Caco-2 (cell line): ENCODE measurements at regions of chr12 and their contacts with region 1.

Region 1: GRCh38 chr12:119902084-119902509 is 25.0 kb upstream of the CIT start:
- DNase-seq: peak; percentile 73 to 74
- H3K4me3 ChIP-seq: no peak overlapping the region
- H3K4me3 Mint-ChIP-seq: no peak overlapping the region
- H3K27ac Mint-ChIP-seq: no peak overlapping the region
- H3K4me1 ChIP-seq: no peaks in the 10 kb centered on the region
- H3K4me1 Mint-ChIP-seq: no peaks in the 10 kb centered on the region
- H3K27me3 ChIP-seq: no peaks in the 10 kb centered on the region
- H3K27me3 Mint-ChIP-seq: no peaks in the 10 kb centered on the region
- CTCF ChIP-seq: peak; percentile 83 to 90

Region 2: GRCh38 chr12:119659289-119659897 is 242.7 kb before region 1 on chr12:
- CTCF ChIA-PET with region 1: no interaction called
- POLR2A ChIA-PET with region 1: no interaction called
- intact Hi-C with region 1: loop called (anchors 5 kb)
- DNase-seq: peak in 1 of 2 experiments; percentile 56
- H3K4me3 ChIP-seq: no peak overlapping the region
- H3K4me3 Mint-ChIP-seq: no peak overlapping the region
- H3K27ac Mint-ChIP-seq: no peak overlapping the region
- H3K4me1 ChIP-seq: no peaks in the 10 kb centered on the region
- H3K4me1 Mint-ChIP-seq: no peaks in the 10 kb centered on the region
- H3K27me3 ChIP-seq: no peaks in the 10 kb centered on the region
- H3K27me3 Mint-ChIP-seq: no peaks in the 10 kb centered on the region
- CTCF ChIP-seq: peak; percentile 57 to 88

Region 3: DNA sequence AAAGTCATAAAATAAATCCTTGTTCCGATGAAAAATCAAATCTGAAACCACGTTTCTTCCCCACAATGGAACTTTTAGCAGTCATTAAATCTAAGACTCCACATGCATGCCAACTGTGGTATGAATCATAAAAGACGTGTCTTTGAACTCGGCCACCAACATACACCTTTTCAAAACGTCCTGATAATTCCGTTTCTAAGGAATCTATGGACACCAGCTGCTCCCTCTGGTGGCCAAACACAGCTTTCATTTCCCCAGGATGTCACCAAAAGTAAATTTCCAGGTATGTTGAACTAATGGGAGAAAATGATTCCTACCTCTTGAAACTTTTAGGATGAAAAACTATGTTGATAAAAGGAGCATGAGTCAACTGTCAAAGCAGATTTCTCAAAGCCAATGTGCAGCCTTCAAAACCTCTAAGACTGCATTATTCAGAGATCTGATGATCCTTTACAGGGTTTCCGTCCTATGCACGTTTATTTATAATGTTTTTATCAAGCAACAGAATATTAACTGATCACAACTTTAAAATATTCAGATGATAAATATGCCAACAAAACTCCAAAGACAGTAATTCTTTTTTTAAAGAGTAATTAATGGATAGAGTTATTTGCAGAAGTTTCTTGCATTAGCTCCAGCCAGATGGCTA is 121.2 kb before region 1 on chr12:
- CTCF ChIA-PET with region 1: no interaction called
- POLR2A ChIA-PET with region 1: no interaction called
- intact Hi-C with region 1: loop called (anchors 2 kb)
- DNase-seq: peak; percentile 47 to 51
- H3K4me3 ChIP-seq: no peak overlapping the region
- H3K4me3 Mint-ChIP-seq: no peak overlapping the region
- H3K27ac Mint-ChIP-seq: no peak overlapping the region
- H3K4me1 ChIP-seq: no peaks in the 10 kb centered on the region
- H3K4me1 Mint-ChIP-seq: peaks cover 6% of the 10 kb centered on the region
- H3K27me3 ChIP-seq: no peaks in the 10 kb centered on the region
- H3K27me3 Mint-ChIP-seq: no peaks in the 10 kb centered on the region
- CTCF ChIP-seq: peak; percentile 67 to 83

Region 4: GRCh38 chr12:119804011-119804641 is 98.0 kb before region 1 on chr12:
- CTCF ChIA-PET with region 1: no interaction called
- POLR2A ChIA-PET with region 1: interaction called, 4 read pairs
- intact Hi-C with region 1: loop called (anchors 1 kb)
- DNase-seq: peak; percentile 65
- H3K4me3 ChIP-seq: no peak overlapping the region
- H3K4me3 Mint-ChIP-seq: no peak overlapping the region
- H3K27ac Mint-ChIP-seq: no peak overlapping the region
- H3K4me1 ChIP-seq: no peaks in the 10 kb centered on the region
- H3K4me1 Mint-ChIP-seq: peaks cover 6% of the 10 kb centered on the region
- H3K27me3 ChIP-seq: no peaks in the 10 kb centered on the region
- H3K27me3 Mint-ChIP-seq: no peaks in the 10 kb centered on the region
- CTCF ChIP-seq: peak; percentile 48 to 79

Region 5: DNA sequence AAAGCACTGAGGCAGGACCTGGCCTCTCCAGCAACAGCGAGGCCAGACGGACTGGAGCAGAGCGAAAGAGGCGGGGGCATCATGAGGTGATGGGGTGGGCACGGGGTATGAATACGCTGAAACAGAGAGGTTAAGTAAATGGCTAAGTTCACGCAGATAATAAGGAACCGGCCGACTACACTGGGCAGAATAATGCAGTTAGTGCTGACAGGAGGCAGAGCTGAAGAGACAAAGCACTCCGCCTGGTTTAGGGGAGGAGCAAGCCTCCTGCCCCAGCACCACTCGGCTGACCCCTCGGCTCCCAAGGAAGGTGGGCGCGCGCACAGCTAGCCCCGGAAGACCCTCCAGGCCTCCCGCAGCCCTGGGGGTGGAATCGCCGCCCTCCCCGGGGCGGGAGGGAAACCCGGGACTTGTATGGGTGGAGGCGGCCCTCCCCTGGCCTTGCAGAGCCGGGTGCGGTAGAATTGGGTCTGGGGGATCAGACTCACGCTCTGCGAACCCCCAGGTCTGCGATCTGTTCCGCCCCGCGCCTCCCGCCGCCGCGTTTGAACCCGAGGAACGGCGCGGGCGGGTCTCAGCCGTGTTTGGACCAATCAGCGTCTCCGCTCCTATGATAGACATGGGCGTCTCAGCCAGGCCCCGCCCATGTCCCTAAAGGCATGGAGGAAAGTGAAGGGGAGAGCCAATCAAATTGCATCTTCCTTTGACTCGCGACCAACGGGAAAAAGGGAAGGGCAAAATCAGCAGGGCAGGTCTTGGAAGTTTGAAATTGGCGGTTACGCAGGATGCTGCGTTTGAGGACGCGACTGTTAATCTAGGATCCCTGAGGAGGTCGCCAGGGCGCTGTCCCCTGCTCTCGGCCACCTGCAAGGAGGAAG is 25.1 kb before region 1 on chr12 and contains the start of gene CIT:
- CTCF ChIA-PET with region 1: interaction called, 3 read pairs
- POLR2A ChIA-PET with region 1: no interaction called
- intact Hi-C with region 1: loop called (anchors 1 kb)
- DNase-seq: peak; percentile 92 to 94
- H3K4me3 ChIP-seq: peak within 1 kb of the TSS; percentile 98
- H3K4me3 Mint-ChIP-seq: peak within 1 kb of the TSS; percentile 91
- H3K27ac Mint-ChIP-seq: peak within 1 kb of the TSS; percentile 82
- H3K4me1 ChIP-seq: no peaks in the 10 kb centered on the region
- H3K4me1 Mint-ChIP-seq: peaks cover 13% of the 10 kb centered on the region
- H3K27me3 ChIP-seq: no peaks in the 10 kb centered on the region
- H3K27me3 Mint-ChIP-seq: peaks cover 3% of the 10 kb centered on the region
- CTCF ChIP-seq: peak in 1 of 2 experiments; percentile 0
- total RNA-seq, gene CIT: 55.9 and 62.3 TPM in 2 replicates

Region 6: GRCh38 chr12:119938049-119938667 is 36.1 kb after region 1 on chr12:
- CTCF ChIA-PET with region 1: no interaction called
- POLR2A ChIA-PET with region 1: no interaction called
- intact Hi-C with region 1: no loop called
- DNase-seq: peak; percentile 53 to 66
- H3K4me3 ChIP-seq: no peak overlapping the region
- H3K4me3 Mint-ChIP-seq: no peak overlapping the region
- H3K27ac Mint-ChIP-seq: no peak overlapping the region
- H3K4me1 ChIP-seq: no peaks in the 10 kb centered on the region
- H3K4me1 Mint-ChIP-seq: no peaks in the 10 kb centered on the region
- H3K27me3 ChIP-seq: no peaks in the 10 kb centered on the region
- H3K27me3 Mint-ChIP-seq: peaks cover 4% of the 10 kb centered on the region
- CTCF ChIP-seq: peak; percentile 79 to 83

Region 7: DNA sequence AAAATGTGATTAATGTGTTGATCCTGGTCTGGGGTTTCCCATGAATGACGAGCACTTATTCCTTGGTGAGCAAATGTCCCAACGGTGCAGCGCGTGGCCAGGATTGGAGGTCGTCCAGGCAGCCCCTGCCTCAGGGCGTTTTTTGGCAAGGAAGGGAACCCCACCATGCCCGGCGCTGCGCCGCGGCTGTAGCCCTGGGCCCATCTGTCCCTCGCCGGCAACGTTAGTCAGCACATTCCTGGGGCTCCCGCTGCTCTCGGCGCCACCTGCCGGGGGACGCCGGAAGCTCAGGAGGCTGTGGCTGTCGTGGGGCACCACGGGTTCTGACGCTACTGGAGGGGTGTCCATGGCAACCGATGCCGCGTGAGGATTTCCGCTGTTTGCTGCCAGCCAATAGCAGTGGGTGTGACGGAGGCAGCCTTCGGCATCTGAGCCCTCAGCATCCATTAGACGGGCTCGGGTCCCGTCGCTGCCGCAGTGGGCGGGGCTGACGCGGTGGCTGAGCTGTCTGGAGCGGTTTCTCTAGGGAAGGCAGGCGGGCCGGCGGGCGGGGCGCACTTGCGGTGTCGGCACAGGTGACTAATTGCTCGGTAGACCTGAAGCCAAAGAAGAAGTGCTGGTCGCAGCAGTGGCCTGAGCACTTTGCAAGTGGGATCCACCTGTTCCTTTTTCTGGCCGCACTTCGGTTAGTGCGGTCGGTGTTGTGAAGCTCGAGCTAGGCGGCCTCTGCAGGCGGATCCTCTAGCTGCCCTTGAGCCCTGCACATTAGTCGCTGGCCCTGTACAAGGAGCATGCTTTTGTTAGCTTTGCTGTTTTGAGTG is 184.9 kb after region 1 on chr12:
- CTCF ChIA-PET with region 1: no interaction called
- POLR2A ChIA-PET with region 1: no interaction called
- intact Hi-C with region 1: no loop called
- DNase-seq: peak; percentile 98 to 99
- H3K4me3 ChIP-seq: peak overlapping the region; percentile 38
- H3K4me3 Mint-ChIP-seq: peak overlapping the region; percentile 76
- H3K27ac Mint-ChIP-seq: peak overlapping the region; percentile 93
- H3K4me1 ChIP-seq: peaks cover 4% of the 10 kb centered on the region; the same call in 1 of the 2 replicates
- H3K4me1 Mint-ChIP-seq: no peaks in the 10 kb centered on the region
- H3K27me3 ChIP-seq: no peaks in the 10 kb centered on the region
- H3K27me3 Mint-ChIP-seq: no peaks in the 10 kb centered on the region
- CTCF ChIP-seq: peak; percentile 94 to 95